Vagina (tissue), 2 donors: ENCODE measurements at regions of chr13 and their contacts with region 1.

Region 1: DNA sequence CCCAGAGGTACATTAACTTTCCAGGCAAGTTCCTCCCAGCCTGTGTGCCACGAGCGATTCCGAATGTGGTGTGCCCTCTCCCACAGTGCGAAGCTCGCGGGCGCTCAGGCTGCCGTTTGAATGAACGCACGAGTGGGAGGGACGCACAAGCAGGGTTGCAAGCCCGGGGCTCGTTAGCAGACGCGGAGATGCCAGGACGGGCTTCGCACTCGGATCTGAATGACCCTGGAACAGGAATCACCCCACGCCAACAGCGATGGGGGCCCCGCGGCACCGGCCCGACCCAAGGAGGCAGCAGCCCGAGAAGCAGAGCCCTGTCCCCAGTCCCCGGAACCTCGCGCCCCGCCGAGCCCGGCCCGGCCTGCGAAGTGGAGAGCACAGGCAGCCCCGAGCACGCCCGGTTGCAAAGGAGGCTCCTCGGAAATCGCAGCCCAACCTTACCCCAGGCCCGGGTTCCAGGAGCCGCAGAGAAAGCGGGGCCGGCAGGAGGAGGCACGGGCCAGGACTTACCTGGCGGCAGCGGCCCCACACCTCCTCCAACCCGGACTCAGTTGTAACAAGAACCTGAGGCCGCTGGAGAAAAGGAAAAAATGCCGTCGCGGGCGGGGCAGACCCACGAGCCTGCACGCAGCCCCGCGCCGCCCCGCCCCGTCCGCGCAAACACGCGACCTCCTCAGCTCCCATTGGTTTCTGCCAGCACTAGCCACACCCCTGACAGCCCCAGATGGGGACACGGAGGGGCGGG is at the start of gene SLC25A30:
- DNase-seq: peak in 1 of 2 donors; percentile 94
- H3K4me3 ChIP-seq: peak within 1 kb of the TSS; percentile 62 to 88
- H3K27ac ChIP-seq: peak within 1 kb of the TSS; percentile 91
- H3K4me1 ChIP-seq: peaks cover 29% of the 10 kb centered on the region
- H3K27me3 ChIP-seq: no peaks in the 10 kb centered on the region
- CTCF ChIP-seq: no peak
- POLR2A ChIP-seq: peak in 1 of 2 donors; percentile 68
- total RNA-seq, gene SLC25A30: 11.5 TPM

Region 2: GRCh38 chr13:45370922-45371406 is 47.0 kb before region 1 on chr13:
- intact Hi-C with region 1: no loop called
- DNase-seq: no peak
- H3K4me3 ChIP-seq: peak overlapping the region in 1 of 2 donors; percentile 27
- H3K27ac ChIP-seq: no peak overlapping the region
- H3K4me1 ChIP-seq: peaks cover 18% of the 10 kb centered on the region
- H3K27me3 ChIP-seq: no peaks in the 10 kb centered on the region
- CTCF ChIP-seq: peak; percentile 68 to 84 (median 82)
- POLR2A ChIP-seq: no peak

Region 3: DNA sequence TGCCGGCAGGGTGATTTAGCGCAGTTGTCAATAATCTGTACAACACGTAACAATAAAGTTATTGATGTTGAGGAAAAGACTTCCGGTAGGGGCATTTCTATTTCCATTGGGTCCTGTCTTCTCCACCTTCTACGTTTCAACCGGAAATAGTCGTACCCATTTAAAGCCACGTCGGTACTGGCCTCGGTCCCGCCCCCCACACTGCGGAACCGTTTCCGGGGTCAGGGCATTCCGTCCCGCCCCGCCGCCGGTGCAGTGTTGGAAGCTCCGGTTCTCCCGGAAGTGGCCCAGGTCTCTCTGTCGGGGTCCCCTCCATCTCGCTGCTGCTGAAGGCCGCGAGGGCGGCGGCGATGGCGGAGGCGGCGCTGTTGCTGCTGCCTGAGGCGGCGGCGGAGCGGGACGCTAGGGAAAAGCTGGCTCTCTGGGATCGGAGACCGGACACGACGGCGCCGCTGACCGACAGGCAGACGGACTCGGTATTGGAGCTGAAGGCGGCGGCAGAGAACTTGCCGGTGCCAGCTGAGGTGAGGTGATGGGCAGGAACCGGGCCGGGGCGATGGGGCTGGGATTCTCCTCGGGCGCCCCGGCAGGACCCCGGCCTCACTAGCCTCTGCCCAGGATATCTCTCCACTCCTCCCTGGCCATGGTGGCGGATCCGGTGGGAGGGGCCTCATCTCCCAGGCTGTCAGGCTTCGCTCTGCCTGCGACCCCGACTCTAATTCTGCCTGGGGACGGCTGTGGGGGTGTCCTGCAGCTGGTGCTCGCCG is 46.9 kb after region 1 on chr13 and contains the start of gene COG3:
- intact Hi-C with region 1: loop called (anchors 5 kb)
- DNase-seq: peak in 1 of 2 donors; percentile 96
- H3K4me3 ChIP-seq: peak within 1 kb of the TSS; percentile 60 to 99
- H3K27ac ChIP-seq: peak within 1 kb of the TSS; percentile 85
- H3K4me1 ChIP-seq: peaks cover 45% of the 10 kb centered on the region
- H3K27me3 ChIP-seq: no peaks in the 10 kb centered on the region
- CTCF ChIP-seq: peak in 1 of 3 experiments; percentile 46
- POLR2A ChIP-seq: no peak
- total RNA-seq, gene COG3: 25.3 TPM